ENCODE measurements at regions of chr14 and their contacts with region 1.

Region 1: GRCh38 chr14:61525293-61526011 is 169.9 kb upstream of the HIF1A start:
- DNase-seq: peak; percentile 85
- ATAC-seq: peak; percentile 88
- H3K4me3 ChIP-seq: peak overlapping the region; percentile 34; the same call in 1 of the 2 replicates
- H3K27ac ChIP-seq: peak overlapping the region; percentile 60
- H3K4me1 ChIP-seq: peaks cover 15% of the 10 kb centered on the region
- H3K27me3 ChIP-seq: no peaks in the 10 kb centered on the region
- CTCF ChIP-seq: no peak
- EP300 ChIP-seq: peak; percentile 35 to 56; a peak in 2 of 4 replicates
- POLR2A ChIP-seq: no peak
- RAD21 ChIP-seq: no peak

Region 2: GRCh38 chr14:61154641-61155040 is 370.8 kb before region 1 on chr14:
- CTCF ChIA-PET with region 1: no interaction called
- POLR2A ChIA-PET with region 1: no interaction called
- RAD21 ChIA-PET with region 1: no interaction called
- SMC1A ChIA-PET with region 1: no interaction called
- in situ Hi-C with region 1: no loop called
- intact Hi-C with region 1: no loop called
- DNase-seq: no peak
- ATAC-seq: no peak
- H3K4me3 ChIP-seq: no peak overlapping the region
- H3K27ac ChIP-seq: no peak overlapping the region
- H3K4me1 ChIP-seq: no peaks in the 10 kb centered on the region
- H3K27me3 ChIP-seq: no peaks in the 10 kb centered on the region
- CTCF ChIP-seq: no peak
- EP300 ChIP-seq: no peak
- POLR2A ChIP-seq: no peak
- RAD21 ChIP-seq: no peak

Region 3: DNA sequence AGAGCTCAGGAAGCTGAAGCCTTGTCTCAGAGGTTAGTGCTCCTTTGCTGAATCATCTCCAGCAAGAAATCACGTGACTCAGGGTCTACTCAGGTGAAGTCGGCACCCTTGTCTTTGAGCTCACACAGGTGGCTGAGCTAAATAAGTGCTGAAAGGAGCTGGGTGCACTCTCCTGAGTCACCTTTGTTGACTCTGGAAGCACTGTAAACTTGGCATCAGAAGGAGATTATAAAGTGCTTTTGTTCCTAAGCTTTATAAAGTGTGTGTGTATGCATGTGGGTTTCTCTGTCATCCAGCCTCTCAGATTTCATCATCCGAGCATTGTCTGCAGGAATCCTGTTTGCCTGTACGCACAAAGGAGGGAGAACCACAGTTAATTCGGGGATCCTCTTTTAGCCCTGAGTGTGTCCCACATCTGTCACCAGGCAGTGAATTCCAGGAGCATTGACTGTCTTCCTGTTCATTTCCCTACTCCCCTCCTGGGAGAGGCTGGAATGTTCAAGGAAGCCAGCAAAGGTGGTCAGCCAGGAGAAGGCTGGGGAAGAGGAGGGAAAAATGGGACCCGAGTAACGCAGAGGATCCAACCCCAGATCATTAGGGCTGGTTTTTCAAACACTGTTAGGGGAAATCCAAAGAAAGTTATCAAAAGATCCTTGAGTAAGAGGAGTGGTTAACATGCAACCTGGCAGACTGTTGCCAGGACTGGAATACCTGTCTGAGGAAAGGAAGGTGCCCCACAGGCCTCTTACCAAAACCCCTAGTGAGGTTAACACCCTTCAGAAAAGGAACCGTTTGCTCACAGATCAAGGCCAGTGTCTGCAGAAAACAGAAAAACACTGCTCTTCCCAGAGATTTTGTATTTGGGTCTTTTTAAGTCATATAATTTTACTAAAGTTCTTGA is 12.4 kb after region 1 on chr14:
- CTCF ChIA-PET with region 1: interaction called, 9 read pairs
- POLR2A ChIA-PET with region 1: no interaction called
- RAD21 ChIA-PET with region 1: interaction called, 13 read pairs
- SMC1A ChIA-PET with region 1: interaction called, 9 read pairs
- in situ Hi-C with region 1: no loop called
- intact Hi-C with region 1: no loop called
- DNase-seq: no peak
- ATAC-seq: peak; percentile 57
- H3K4me3 ChIP-seq: no peak overlapping the region
- H3K27ac ChIP-seq: no peak overlapping the region
- H3K4me1 ChIP-seq: no peaks in the 10 kb centered on the region
- H3K27me3 ChIP-seq: no peaks in the 10 kb centered on the region
- CTCF ChIP-seq: no peak
- EP300 ChIP-seq: no peak
- POLR2A ChIP-seq: no peak
- RAD21 ChIP-seq: no peak

Region 4: GRCh38 chr14:61553725-61554641 is 28.5 kb after region 1 on chr14:
- CTCF ChIA-PET with region 1: interaction called, 3 read pairs
- POLR2A ChIA-PET with region 1: no interaction called
- RAD21 ChIA-PET with region 1: interaction called, 5 read pairs
- SMC1A ChIA-PET with region 1: interaction called, 11 read pairs
- in situ Hi-C with region 1: no loop called
- intact Hi-C with region 1: no loop called
- DNase-seq: no peak
- ATAC-seq: no peak
- H3K4me3 ChIP-seq: no peak overlapping the region
- H3K27ac ChIP-seq: no peak overlapping the region
- H3K4me1 ChIP-seq: peaks cover 15% of the 10 kb centered on the region
- H3K27me3 ChIP-seq: no peaks in the 10 kb centered on the region
- CTCF ChIP-seq: no peak
- EP300 ChIP-seq: no peak
- POLR2A ChIP-seq: no peak
- RAD21 ChIP-seq: no peak